GM12878 (cell line): ENCODE measurements at regions of chr4 and their contacts with region 1.

Region 1: DNA sequence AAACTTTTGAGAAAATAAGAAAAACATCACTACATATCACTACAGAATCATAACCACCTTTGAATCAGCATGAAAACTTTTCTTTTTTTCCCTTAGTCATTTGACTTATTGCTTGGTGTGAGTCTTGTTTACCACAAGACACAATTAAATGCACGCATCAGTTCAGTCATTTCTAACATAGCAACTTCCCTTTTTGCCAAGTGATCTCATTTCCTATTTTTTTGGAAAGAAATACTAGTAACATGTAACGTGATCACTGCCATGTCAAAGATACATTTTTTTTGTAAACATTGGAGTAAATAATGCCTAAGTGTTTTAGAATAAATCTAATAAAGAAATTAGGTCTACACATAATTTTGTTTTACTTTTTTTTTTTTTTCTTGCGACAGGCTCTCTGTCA is 5.1 kb upstream of the CXCL8 start:
- DNase-seq: peak; percentile 79
- ATAC-seq: peak; percentile 92
- H3K4me3 ChIP-seq: no peak overlapping the region
- H3K27ac ChIP-seq: no peak overlapping the region
- H3K4me1 ChIP-seq: peaks cover 18% of the 10 kb centered on the region
- H3K27me3 ChIP-seq: no peaks in the 10 kb centered on the region
- CTCF ChIP-seq: no peak
- EP300 ChIP-seq: peak; percentile 99
- POLR2A ChIP-seq: no peak
- RAD21 ChIP-seq: no peak

Region 2: DNA sequence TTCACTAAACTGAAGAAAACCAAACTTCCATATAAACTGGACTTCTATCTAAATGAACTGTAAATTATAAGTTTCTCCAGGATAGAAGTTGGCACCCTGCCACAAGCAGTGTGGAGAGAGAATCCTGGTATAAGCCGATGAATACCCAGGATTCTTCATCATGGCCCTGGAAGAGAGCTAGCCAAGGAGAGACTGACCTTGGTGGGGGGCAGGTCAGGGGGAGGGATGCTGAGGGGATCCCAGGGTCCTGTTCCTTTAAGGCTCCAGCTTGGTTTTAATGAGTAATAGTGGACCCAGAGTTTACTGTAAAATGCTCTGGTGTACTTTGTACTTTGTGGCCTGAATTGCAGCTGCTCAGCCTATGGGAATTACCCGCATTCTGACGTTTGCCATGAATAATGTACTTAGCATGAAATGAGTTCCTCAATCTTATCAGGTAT is 131.9 kb before region 1 on chr4:
- CTCF ChIA-PET with region 1: no interaction called
- POLR2A ChIA-PET with region 1: no interaction called
- RAD21 ChIA-PET with region 1: no interaction called
- SMC1A ChIA-PET with region 1: no interaction called
- in situ Hi-C with region 1: loop called (anchors 5 kb)
- intact Hi-C with region 1: no loop called
- DNase-seq: no peak
- ATAC-seq: peak; percentile 76
- H3K4me3 ChIP-seq: no peak overlapping the region
- H3K27ac ChIP-seq: no peak overlapping the region
- H3K4me1 ChIP-seq: peaks cover 16% of the 10 kb centered on the region
- H3K27me3 ChIP-seq: no peaks in the 10 kb centered on the region
- CTCF ChIP-seq: no peak
- EP300 ChIP-seq: peak; percentile 89 to 90; a peak in 3 of 4 replicates
- POLR2A ChIP-seq: no peak
- RAD21 ChIP-seq: no peak

Region 3: GRCh38 chr4:73718375-73719373 is 16.6 kb before region 1 on chr4:
- CTCF ChIA-PET with region 1: interaction called, 25 read pairs
- POLR2A ChIA-PET with region 1: interaction called, 4 read pairs
- RAD21 ChIA-PET with region 1: no interaction called
- SMC1A ChIA-PET with region 1: interaction called, 22 read pairs
- in situ Hi-C with region 1: no loop called
- intact Hi-C with region 1: loop called (anchors 1 kb)
- DNase-seq: peak; percentile 84
- ATAC-seq: peak; percentile 95
- H3K4me3 ChIP-seq: no peak overlapping the region
- H3K27ac ChIP-seq: peak overlapping the region; percentile 40; the same call in 1 of the 2 replicates
- H3K4me1 ChIP-seq: peaks cover 17% of the 10 kb centered on the region
- H3K27me3 ChIP-seq: no peaks in the 10 kb centered on the region
- CTCF ChIP-seq: no peak
- EP300 ChIP-seq: peak; percentile 85 to 90
- POLR2A ChIP-seq: no peak
- RAD21 ChIP-seq: no peak

Region 4: DNA sequence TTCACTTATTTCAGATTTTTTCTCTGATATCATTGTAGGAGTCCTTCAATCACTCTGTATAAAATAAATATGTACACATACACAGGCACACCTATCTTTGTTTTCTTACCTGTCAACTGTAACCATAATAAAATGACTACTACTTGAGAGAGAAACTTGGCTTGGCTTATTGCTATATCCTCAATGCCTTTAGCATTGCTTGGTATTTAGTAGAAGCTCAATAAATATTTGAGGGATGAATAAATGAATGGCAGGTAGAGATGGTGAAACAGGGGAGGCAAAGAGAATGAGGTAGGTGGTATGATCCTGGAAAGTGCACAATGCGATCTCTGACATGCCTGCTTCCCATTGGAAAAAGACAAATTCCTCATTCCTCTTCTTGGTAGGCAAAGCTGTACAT is 79.4 kb after region 1 on chr4:
- CTCF ChIA-PET with region 1: no interaction called
- POLR2A ChIA-PET with region 1: no interaction called
- RAD21 ChIA-PET with region 1: no interaction called
- SMC1A ChIA-PET with region 1: no interaction called
- in situ Hi-C with region 1: no loop called
- intact Hi-C with region 1: no loop called
- DNase-seq: no peak
- ATAC-seq: no peak
- H3K4me3 ChIP-seq: no peak overlapping the region
- H3K27ac ChIP-seq: no peak overlapping the region
- H3K4me1 ChIP-seq: no peaks in the 10 kb centered on the region
- H3K27me3 ChIP-seq: no peaks in the 10 kb centered on the region
- CTCF ChIP-seq: no peak
- EP300 ChIP-seq: no peak
- POLR2A ChIP-seq: no peak
- RAD21 ChIP-seq: no peak